Dorsolateral prefrontal cortex (tissue), 120 donors: ENCODE measurements at regions of chr5 and their contacts with region 1.

Region 1: GRCh38 chr5:137218471-137218870 is 280.7 kb downstream of the SPOCK1 start:
- DNase-seq: no peak
- H3K4me3 ChIP-seq: peak overlapping the region in 1 of 59 donors; percentile 7
- H3K27ac ChIP-seq: peak overlapping the region; percentile 10 to 95 (median 79)
- H3K27me3 ChIP-seq: no peaks in the 10 kb centered on the region
- CTCF ChIP-seq: peak in 2 of 56 donors; percentile 18 to 22

Region 2: DNA sequence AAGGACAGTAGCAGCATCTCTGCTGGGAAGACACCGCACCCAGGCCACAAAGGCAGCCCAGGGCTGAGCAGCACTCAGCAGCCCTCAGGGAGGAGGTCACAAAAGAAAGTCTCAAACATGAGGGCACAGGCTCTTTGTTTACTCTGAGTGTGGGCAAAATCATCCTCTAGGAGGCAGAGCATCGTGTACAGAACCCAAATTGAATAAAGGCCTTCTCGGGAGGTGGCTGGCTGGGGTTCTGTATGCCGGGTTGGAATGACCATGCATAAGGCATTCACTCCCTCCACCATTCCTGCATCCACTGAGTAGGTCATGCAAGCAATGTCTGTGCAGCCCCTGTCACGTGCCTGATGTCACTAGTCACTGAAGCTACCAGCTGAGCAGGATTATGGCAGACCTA is 132.1 kb before region 1 on chr5:
- intact Hi-C with region 1: loop called in 1 of 2 experiments (anchors 10 kb)
- DNase-seq: no peak
- H3K4me3 ChIP-seq: peak overlapping the region in 7 of 59 donors; percentile 4 to 40 (median 22)
- H3K27ac ChIP-seq: peak overlapping the region in 49 of 59 donors; percentile 1 to 81 (median 54)
- H3K27me3 ChIP-seq: no peaks in the 10 kb centered on the region
- CTCF ChIP-seq: peak in 22 of 56 donors; percentile 7 to 38 (median 22)

Region 3: GRCh38 chr5:137142764-137143605 is 75.5 kb before region 1 on chr5:
- intact Hi-C with region 1: loop called in 1 of 2 experiments (anchors 5 kb)
- DNase-seq: peak in 5 of 10 donors; percentile 23 to 55 (median 42)
- H3K4me3 ChIP-seq: no peak overlapping the region
- H3K27ac ChIP-seq: peak overlapping the region in 4 of 59 donors; percentile 2 to 29 (median 12)
- H3K27me3 ChIP-seq: no peaks in the 10 kb centered on the region
- CTCF ChIP-seq: no peak

Region 4: GRCh38 chr5:137234973-137235943 is 16.8 kb after region 1 on chr5:
- intact Hi-C with region 1: no loop called
- DNase-seq: no peak
- H3K4me3 ChIP-seq: no peak overlapping the region
- H3K27ac ChIP-seq: no peak overlapping the region
- H3K27me3 ChIP-seq: no peaks in the 10 kb centered on the region
- CTCF ChIP-seq: no peak

Region 5: DNA sequence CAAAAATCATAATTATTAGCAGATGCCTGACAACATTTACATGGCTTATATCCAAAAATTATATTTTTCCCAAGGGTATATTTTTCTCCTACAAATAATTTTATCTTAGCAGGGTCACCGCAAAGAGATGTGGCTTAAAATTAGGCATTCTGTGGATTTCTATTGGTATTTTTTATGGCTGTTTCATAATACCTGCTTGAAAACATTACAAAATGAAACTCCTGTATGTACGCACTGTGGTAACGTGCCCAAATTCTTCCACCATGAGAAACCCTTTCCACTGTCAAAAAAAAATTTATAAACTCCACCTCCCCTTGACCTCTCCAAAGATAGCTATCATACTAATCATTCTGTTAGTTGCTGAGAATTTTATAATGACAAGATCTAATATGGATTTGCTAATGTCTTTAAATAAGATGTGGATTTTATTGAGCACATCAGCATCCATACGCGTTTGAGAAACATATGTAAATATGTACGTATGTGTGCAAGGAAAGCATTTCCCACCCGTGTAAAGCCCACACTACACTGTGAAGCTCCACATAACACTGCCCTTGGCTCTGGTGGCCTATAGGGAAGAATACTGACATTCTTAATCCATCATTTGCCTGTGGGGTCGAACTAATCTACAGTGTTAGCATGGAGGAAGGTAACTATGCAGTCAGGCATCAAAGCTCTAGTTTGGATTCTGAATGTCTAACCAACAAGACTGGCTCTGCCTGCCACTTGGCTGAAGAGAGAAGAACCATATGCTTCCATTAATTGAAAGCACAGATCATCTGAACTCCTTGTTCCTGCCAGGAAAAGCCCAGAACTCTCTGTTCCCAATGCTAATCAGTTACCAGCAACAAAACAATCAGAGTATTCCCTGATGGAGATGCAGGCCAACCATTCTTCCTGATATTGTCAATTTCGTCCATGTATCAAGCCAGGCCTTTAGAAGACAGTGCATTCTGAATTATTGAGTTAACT is 35.9 kb after region 1 on chr5:
- intact Hi-C with region 1: loop called in 1 of 2 experiments (anchors 5 kb)
- DNase-seq: peak in 4 of 10 donors; percentile 21 to 79 (median 68)
- H3K4me3 ChIP-seq: peak overlapping the region in 2 of 59 donors; percentile 10 to 28
- H3K27ac ChIP-seq: peak overlapping the region in 58 of 59 donors; percentile 32 to 99 (median 90)
- H3K27me3 ChIP-seq: no peaks in the 10 kb centered on the region
- CTCF ChIP-seq: peak in 2 of 56 donors; percentile 18

Region 6: DNA sequence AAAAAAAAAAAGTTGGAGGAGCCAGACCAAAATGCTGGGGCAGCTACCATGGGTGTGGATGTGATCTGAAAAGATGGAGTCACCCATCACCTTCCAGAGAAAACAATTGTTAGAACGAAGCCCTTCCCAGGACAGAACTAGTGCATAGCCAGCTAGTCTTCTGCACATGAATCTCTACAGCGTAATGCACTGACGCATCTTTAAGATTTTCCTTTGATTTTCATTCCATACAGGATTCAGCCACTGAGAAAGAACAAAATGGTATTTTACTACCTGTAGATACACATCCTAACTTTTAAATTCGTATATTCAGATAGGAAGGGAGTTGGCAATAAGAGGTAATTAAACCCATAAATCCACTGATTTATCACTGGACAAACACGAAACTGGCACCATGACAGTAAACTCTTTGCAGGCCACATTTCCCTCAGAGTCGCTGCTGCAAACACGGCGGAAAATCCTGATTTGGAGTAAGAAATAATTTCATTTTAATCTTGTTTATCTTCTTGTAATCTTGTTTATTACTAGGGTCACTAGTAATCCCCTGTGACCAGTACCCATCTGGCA is 74.1 kb after region 1 on chr5:
- intact Hi-C with region 1: loop called in 1 of 2 experiments (anchors 5 kb)
- DNase-seq: peak in 1 of 10 donors; percentile 5
- H3K4me3 ChIP-seq: no peak overlapping the region
- H3K27ac ChIP-seq: peak overlapping the region in 7 of 59 donors; percentile 3 to 64 (median 35)
- H3K27me3 ChIP-seq: no peaks in the 10 kb centered on the region
- CTCF ChIP-seq: no peak